ENCODE measurements at regions of chr4 and their contacts with region 1.

Region 1: GRCh38 chr4:168923526-168924194 is 86.4 kb downstream of the CBR4 start:
- DNase-seq: peak in 1 of 2 donors; percentile 83
- ATAC-seq: peak; percentile 68 to 77 (median 73)
- H3K4me3 ChIP-seq: no peak overlapping the region
- H3K4me3 Mint-ChIP-seq: no peak overlapping the region
- H3K27ac ChIP-seq: no peak overlapping the region
- H3K27ac Mint-ChIP-seq: no peak overlapping the region
- H3K4me1 ChIP-seq: no peaks in the 10 kb centered on the region
- H3K4me1 Mint-ChIP-seq: peaks cover 5% of the 10 kb centered on the region in 2 donors
- H3K27me3 ChIP-seq: no peaks in the 10 kb centered on the region
- H3K27me3 Mint-ChIP-seq: no peaks in the 10 kb centered on the region
- CTCF ChIP-seq: peak; percentile 89

Region 2: DNA sequence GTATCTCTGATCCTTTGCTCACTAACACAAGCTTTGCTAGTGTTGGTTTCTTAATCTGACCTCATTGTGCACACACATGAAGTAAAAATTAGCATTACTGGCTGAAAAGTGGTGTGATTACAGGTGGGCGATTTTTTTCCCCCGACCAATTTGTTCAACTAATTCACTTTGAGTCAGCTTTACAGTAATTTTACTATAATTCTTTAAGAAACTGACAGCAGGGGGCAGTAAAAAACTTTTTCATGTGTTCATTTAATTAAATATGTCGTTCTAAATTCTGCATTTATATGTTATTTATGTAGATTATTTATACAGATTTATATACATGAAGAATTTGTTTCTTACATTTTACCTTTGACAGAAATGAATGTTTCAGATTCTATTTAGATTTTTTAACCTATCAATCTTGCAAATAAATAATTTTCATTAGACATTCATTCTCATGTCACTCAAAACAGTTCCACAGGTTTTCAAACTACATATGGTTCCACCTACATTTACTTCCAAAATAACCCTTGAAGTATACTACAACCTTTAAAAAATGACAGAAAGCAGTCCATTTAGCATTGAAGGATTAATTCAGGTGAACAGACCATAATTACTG is 409.3 kb before region 1 on chr4:
- intact Hi-C with region 1: loop called (anchors 5 kb)
- DNase-seq: peak in 1 of 2 donors; percentile 64
- ATAC-seq: no peak
- H3K4me3 ChIP-seq: no peak overlapping the region
- H3K4me3 Mint-ChIP-seq: no peak overlapping the region
- H3K27ac ChIP-seq: no peak overlapping the region
- H3K27ac Mint-ChIP-seq: no peak overlapping the region
- H3K4me1 ChIP-seq: peaks cover 13% of the 10 kb centered on the region
- H3K4me1 Mint-ChIP-seq: peaks cover 0 to 4% of the 10 kb centered on the region in 2 donors
- H3K27me3 ChIP-seq: no peaks in the 10 kb centered on the region
- H3K27me3 Mint-ChIP-seq: peaks cover 0 to 7% of the 10 kb centered on the region in 2 donors
- CTCF ChIP-seq: peak; percentile 56

Region 3: DNA sequence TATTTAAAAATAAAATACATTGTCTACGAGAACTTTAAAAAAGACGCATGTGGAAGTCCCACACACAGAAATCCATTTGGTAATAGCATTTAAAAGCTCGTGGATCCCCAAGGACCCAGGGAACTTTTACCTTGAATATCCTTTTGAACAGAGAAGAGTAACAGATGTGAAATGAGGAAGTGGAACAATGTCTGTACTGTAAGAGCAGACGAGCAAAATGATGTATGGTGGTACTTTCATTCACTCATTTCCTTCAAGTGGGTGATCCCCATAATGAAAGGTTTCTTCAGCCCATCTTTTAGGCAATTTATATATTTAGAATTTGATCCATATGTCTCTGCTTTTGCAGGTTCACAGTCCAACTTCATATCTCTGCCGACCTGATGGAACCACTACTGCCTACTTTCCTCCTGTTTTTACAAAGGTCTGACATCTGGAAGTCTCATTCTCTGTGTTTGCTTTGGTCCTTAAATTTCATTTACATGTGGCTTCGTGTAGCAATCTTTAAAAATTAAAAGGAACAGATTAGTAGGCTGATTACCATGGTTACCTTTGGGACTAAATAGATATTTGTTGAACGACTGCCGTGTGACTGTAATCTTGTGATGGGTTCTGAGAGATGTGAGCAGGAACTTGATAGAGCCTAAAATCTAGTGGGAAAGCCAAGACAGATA is 238.4 kb before region 1 on chr4:
- intact Hi-C with region 1: no loop called
- DNase-seq: no peak
- ATAC-seq: no peak
- H3K4me3 ChIP-seq: no peak overlapping the region
- H3K4me3 Mint-ChIP-seq: no peak overlapping the region
- H3K27ac ChIP-seq: no peak overlapping the region
- H3K27ac Mint-ChIP-seq: no peak overlapping the region
- H3K4me1 ChIP-seq: no peaks in the 10 kb centered on the region
- H3K4me1 Mint-ChIP-seq: no peaks in the 10 kb centered on the region
- H3K27me3 ChIP-seq: no peaks in the 10 kb centered on the region
- H3K27me3 Mint-ChIP-seq: peaks cover 11 to 14% of the 10 kb centered on the region in 2 donors
- CTCF ChIP-seq: no peak

Region 4: DNA sequence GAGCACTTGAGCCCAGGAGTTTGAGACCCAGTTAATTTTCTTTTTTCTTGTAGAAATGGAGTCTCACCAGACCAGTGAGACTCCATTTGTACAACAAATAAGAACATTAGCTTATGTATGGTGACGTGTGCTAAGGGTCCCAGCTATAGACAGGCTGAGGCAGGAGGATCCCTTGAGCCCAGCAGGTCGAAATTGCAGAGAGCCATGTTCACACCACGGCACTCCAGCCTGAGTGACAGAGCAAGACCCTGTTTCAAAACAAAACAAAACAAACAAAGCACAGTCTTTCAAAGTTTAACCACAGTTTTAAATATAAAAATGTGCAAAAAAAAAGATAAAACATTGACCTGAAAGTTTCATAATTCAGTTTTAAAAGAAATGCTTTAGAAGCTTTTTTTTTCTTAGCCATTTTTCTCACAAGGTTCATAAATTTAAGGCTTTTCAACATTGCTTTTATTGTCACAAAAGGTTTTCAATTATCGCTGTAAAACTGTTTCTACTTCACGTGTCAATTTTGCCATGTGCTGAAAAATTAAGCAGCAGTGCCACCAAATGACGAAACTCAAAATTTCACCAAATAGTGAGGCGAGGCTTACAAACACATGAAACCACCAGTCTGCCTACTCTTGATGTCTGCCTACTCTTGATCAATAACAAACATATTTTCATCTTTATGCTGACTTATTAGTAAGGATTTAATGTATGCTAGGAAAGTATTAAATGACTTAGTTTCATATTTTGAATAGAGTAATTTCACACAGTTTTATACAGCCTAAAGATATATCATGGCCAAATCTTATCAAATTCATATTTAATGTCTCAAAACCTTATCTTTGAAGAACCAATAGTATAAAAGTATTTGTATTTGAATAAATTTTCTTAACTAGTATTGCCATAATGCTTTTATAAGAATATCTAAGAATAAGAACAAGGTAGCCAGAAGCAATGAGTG is 562.4 kb after region 1 on chr4:
- intact Hi-C with region 1: loop called (anchors 1 kb)
- DNase-seq: peak in 1 of 2 donors; percentile 63
- ATAC-seq: peak in 2 of 3 donors; percentile 40 to 61
- H3K4me3 ChIP-seq: no peak overlapping the region
- H3K4me3 Mint-ChIP-seq: no peak overlapping the region
- H3K27ac ChIP-seq: no peak overlapping the region
- H3K27ac Mint-ChIP-seq: no peak overlapping the region
- H3K4me1 ChIP-seq: no peaks in the 10 kb centered on the region
- H3K4me1 Mint-ChIP-seq: peaks cover 0 to 4% of the 10 kb centered on the region in 2 donors
- H3K27me3 ChIP-seq: no peaks in the 10 kb centered on the region
- H3K27me3 Mint-ChIP-seq: no peaks in the 10 kb centered on the region
- CTCF ChIP-seq: peak; percentile 60

Region 5: GRCh38 chr4:169566021-169566818 is 642.6 kb after region 1 on chr4:
- intact Hi-C with region 1: loop called (anchors 1 kb)
- DNase-seq: peak in 1 of 2 donors; percentile 66
- ATAC-seq: peak; percentile 64 to 78 (median 76)
- H3K4me3 ChIP-seq: no peak overlapping the region
- H3K4me3 Mint-ChIP-seq: peak overlapping the region; percentile 13
- H3K27ac ChIP-seq: no peak overlapping the region
- H3K27ac Mint-ChIP-seq: no peak overlapping the region
- H3K4me1 ChIP-seq: no peaks in the 10 kb centered on the region
- H3K4me1 Mint-ChIP-seq: peaks cover 4 to 17% of the 10 kb centered on the region in 2 donors
- H3K27me3 ChIP-seq: no peaks in the 10 kb centered on the region
- H3K27me3 Mint-ChIP-seq: no peaks in the 10 kb centered on the region
- CTCF ChIP-seq: peak; percentile 66

Measured in natural killer cell (primary cell).